ENCODE measurements at regions of chr3 and their contacts with region 1.

Region 1: DNA sequence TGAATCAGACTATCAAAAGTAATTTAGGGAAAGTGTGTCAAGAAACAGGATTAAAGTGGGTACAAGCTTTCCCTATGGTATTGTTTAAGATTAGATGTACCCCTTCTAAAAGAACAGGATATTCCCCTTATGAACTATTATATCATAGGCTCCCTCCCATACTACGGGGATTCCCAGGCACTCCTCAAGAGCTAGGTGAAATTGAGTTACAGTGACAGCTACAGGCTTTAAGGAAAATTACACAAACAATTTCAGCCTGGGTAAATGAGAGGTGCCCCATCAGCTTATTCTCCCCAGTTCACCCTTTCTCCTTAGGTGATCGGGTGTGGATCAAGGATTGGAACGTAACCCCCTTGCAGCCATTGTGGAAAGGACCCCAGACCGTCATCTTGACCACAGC is 240.8 kb upstream of the CNTN6 start:
- DNase-seq: no peak
- H3K4me3 ChIP-seq: no peak overlapping the region
- H3K27ac ChIP-seq: no peak overlapping the region
- H3K27me3 ChIP-seq: no peaks in the 10 kb centered on the region
- CTCF ChIP-seq: peak in 12 of 56 donors; percentile 6 to 38 (median 20)

Region 2: GRCh38 chr3:632572-633170 is 219.4 kb before region 1 on chr3:
- intact Hi-C with region 1: loop called in 1 of 2 experiments (anchors 2 kb)
- DNase-seq: peak in 9 of 10 donors; percentile 38 to 84 (median 56)
- H3K4me3 ChIP-seq: peak overlapping the region in 1 of 59 donors; percentile 24
- H3K27ac ChIP-seq: no peak overlapping the region
- H3K27me3 ChIP-seq: peaks cover 0 to 4% (median 0%) of the 10 kb centered on the region in 45 donors
- CTCF ChIP-seq: peak; percentile 46 to 94 (median 85)

Region 3: DNA sequence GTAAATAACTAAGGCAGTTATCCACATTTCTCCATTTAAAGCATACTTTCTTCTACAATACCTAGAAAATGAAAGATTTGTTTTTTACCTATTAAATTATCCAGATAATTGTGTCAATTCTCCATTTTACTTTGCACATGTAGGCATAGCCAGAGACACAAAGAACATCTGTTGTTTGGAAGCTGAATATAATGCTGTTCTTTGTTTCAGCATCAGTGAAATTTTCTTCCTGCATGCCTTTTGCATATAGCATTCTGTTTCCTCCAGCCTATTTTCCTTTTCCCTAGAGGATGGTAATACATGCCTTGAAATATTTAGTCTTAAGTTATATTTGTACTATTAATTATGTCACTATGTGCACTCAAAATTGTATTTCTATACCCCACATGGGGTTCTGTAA is 474.5 kb after region 1 on chr3:
- intact Hi-C with region 1: no loop called
- DNase-seq: no peak
- H3K4me3 ChIP-seq: no peak overlapping the region
- H3K27ac ChIP-seq: peak overlapping the region in 3 of 59 donors; percentile 22 to 59 (median 49)
- H3K27me3 ChIP-seq: no peaks in the 10 kb centered on the region
- CTCF ChIP-seq: no peak

Measured in dorsolateral prefrontal cortex (tissue), 120 donors.